Naive thymus-derived CD4-positive, alpha-beta T cell (primary cell): ENCODE measurements at regions of chr16 and their contacts with region 1.

Region 1: GRCh38 chr16:29926005-29926710 is at the start of gene KCTD13:
- DNase-seq: peak; percentile 81 to 99 (median 92)
- ATAC-seq: peak; percentile 96
- H3K4me3 ChIP-seq: peak within 1 kb of the TSS; percentile 88
- H3K4me3 Mint-ChIP-seq: peak within 1 kb of the TSS; percentile 89 to 95 (median 93)
- H3K27ac ChIP-seq: peak within 1 kb of the TSS; percentile 94
- H3K27ac Mint-ChIP-seq: peak within 1 kb of the TSS; percentile 91 to 98 (median 97)
- H3K4me1 ChIP-seq: peaks cover 7 to 18% of the 10 kb centered on the region in 2 donors
- H3K4me1 Mint-ChIP-seq: peaks cover 30 to 50% (median 40%) of the 10 kb centered on the region in 7 donors
- H3K27me3 ChIP-seq: no peaks in the 10 kb centered on the region
- H3K27me3 Mint-ChIP-seq: peaks cover 0 to 2% (median 0%) of the 10 kb centered on the region in 5 donors
- total RNA-seq, gene KCTD13: 40.7 to 81.1 (median 45.9) TPM

Region 2: GRCh38 chr16:29815793-29816693 is 110.1 kb before region 1 on chr16 and contains the start of gene PAGR1:
- CTCF ChIA-PET with region 1: no interaction called
- POLR2A ChIA-PET with region 1: interaction called, 3 read pairs
- intact Hi-C with region 1: loop called in 1 of 2 experiments (anchors 5 kb)
- DNase-seq: peak; percentile 92 to 99 (median 99)
- ATAC-seq: peak; percentile 87
- H3K4me3 ChIP-seq: peak within 1 kb of the TSS; percentile 99
- H3K4me3 Mint-ChIP-seq: peak within 1 kb of the TSS; percentile 85 to 100 (median 96)
- H3K27ac ChIP-seq: peak within 1 kb of the TSS; percentile 92
- H3K27ac Mint-ChIP-seq: peak within 1 kb of the TSS; percentile 95 to 99 (median 99)
- H3K4me1 ChIP-seq: peaks cover 29 to 41% of the 10 kb centered on the region in 2 donors
- H3K4me1 Mint-ChIP-seq: peaks cover 40 to 75% (median 59%) of the 10 kb centered on the region in 7 donors
- H3K27me3 ChIP-seq: no peaks in the 10 kb centered on the region
- H3K27me3 Mint-ChIP-seq: peaks cover 0 to 22% (median 0%) of the 10 kb centered on the region in 5 donors
- total RNA-seq, gene PAGR1: 17.5 to 42.0 (median 25.7) TPM

Region 3: DNA sequence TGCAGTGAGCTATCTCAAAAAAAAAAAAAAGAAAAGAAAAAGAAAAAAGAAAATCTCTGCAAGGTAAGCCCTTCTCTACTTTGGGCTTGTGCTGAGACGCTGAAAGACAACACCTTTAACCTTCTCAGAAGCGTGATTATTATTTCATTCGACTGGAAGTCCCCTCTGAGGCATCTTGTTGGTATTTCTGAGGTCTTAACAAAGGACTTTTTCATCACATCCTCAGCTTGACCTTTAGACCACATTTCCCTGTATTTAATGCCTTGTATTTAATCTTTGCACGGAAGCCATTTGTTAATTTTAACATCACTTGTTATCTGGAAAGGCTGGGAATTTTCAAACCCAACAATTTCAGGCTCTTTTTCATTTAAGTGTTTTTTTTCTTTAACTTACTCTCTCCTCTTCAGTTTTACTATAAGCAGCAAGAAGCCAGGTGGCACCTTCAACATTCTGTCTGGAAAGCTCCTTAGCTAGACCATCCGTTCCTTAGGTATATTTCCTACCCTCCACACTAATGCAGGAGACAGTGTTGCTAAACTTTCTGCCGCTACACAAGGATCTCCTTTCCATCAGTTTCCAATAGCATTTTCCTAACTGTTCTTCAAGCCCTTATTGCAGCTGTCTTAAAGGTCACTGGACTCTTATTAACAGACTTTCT is 10.4 kb before region 1 on chr16:
- CTCF ChIA-PET with region 1: no interaction called
- POLR2A ChIA-PET with region 1: interaction called, 12 read pairs
- intact Hi-C with region 1: no loop called
- DNase-seq: no peak
- ATAC-seq: no peak
- H3K4me3 ChIP-seq: no peak overlapping the region
- H3K4me3 Mint-ChIP-seq: no peak overlapping the region
- H3K27ac ChIP-seq: no peak overlapping the region
- H3K27ac Mint-ChIP-seq: peak overlapping the region in 1 of 9 donors; percentile 33
- H3K4me1 ChIP-seq: no peaks in the 10 kb centered on the region
- H3K4me1 Mint-ChIP-seq: peaks cover 6 to 10% (median 9%) of the 10 kb centered on the region in 7 donors
- H3K27me3 ChIP-seq: no peaks in the 10 kb centered on the region
- H3K27me3 Mint-ChIP-seq: no peaks in the 10 kb centered on the region

Region 4: GRCh38 chr16:29973384-29974246 is 47.5 kb after region 1 on chr16 and contains the start of gene TAOK2:
- CTCF ChIA-PET with region 1: interaction called, 4 read pairs
- POLR2A ChIA-PET with region 1: interaction called, 28 read pairs
- intact Hi-C with region 1: loop called (anchors 1 kb)
- DNase-seq: peak; percentile 83 to 98 (median 89)
- ATAC-seq: peak; percentile 97
- H3K4me3 ChIP-seq: peak within 1 kb of the TSS; percentile 98
- H3K4me3 Mint-ChIP-seq: peak within 1 kb of the TSS; percentile 80 to 97 (median 94)
- H3K27ac ChIP-seq: peak within 1 kb of the TSS; percentile 78
- H3K27ac Mint-ChIP-seq: peak within 1 kb of the TSS; percentile 77 to 93 (median 91)
- H3K4me1 ChIP-seq: peaks cover 20 to 23% of the 10 kb centered on the region in 2 donors
- H3K4me1 Mint-ChIP-seq: peaks cover 23 to 39% (median 37%) of the 10 kb centered on the region in 7 donors
- H3K27me3 ChIP-seq: no peaks in the 10 kb centered on the region
- H3K27me3 Mint-ChIP-seq: no peaks in the 10 kb centered on the region
- total RNA-seq, gene TAOK2: 19.4 to 48.5 (median 42.9) TPM

Region 5: GRCh38 chr16:30005341-30006094 is 79.4 kb after region 1 on chr16:
- CTCF ChIA-PET with region 1: interaction called, 3 read pairs
- POLR2A ChIA-PET with region 1: interaction called, 3 read pairs
- intact Hi-C with region 1: loop called in 1 of 2 experiments (anchors 2 kb)
- DNase-seq: peak in 7 of 9 donors; percentile 30 to 48 (median 43)
- ATAC-seq: peak; percentile 76
- H3K4me3 ChIP-seq: no peak overlapping the region
- H3K4me3 Mint-ChIP-seq: no peak overlapping the region
- H3K27ac ChIP-seq: no peak overlapping the region
- H3K27ac Mint-ChIP-seq: peak overlapping the region in 1 of 9 donors; percentile 48
- H3K4me1 ChIP-seq: peaks cover 4 to 6% of the 10 kb centered on the region in 2 donors
- H3K4me1 Mint-ChIP-seq: peaks cover 0 to 9% (median 4%) of the 10 kb centered on the region in 7 donors
- H3K27me3 ChIP-seq: peaks cover 0 to 4% of the 10 kb centered on the region in 2 donors
- H3K27me3 Mint-ChIP-seq: peaks cover 0 to 19% (median 0%) of the 10 kb centered on the region in 5 donors